PC-3 (cell line): ENCODE measurements at regions of chr20 and their contacts with region 1.

Region 1: DNA sequence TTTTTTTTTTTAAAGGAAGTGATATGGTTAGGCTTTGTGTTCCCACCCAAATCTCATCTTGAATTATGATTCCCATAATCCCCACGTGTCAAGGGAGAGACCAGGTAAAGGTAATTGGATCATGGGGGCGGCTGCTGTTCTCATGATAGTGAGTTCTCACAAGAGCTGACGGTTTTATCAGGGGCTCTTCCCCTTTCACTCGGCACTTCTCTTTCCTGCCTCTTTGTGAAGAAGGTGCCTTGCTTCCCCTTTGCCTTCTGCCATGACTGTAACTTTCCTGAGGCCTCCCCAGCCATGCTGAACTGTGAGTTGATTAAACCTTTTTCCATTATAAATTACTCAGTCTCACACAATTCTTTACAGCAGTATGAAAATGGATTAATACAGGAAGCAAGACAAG is 64.3 kb downstream of the ZFP64 start:
- DNase-seq: no peak
- ATAC-seq: no peak
- H3K4me3 ChIP-seq: no peak overlapping the region
- H3K27ac ChIP-seq: no peak overlapping the region
- H3K4me1 ChIP-seq: no peaks in the 10 kb centered on the region
- H3K27me3 ChIP-seq: no peaks in the 10 kb centered on the region
- CTCF ChIP-seq: no peak

Region 2: DNA sequence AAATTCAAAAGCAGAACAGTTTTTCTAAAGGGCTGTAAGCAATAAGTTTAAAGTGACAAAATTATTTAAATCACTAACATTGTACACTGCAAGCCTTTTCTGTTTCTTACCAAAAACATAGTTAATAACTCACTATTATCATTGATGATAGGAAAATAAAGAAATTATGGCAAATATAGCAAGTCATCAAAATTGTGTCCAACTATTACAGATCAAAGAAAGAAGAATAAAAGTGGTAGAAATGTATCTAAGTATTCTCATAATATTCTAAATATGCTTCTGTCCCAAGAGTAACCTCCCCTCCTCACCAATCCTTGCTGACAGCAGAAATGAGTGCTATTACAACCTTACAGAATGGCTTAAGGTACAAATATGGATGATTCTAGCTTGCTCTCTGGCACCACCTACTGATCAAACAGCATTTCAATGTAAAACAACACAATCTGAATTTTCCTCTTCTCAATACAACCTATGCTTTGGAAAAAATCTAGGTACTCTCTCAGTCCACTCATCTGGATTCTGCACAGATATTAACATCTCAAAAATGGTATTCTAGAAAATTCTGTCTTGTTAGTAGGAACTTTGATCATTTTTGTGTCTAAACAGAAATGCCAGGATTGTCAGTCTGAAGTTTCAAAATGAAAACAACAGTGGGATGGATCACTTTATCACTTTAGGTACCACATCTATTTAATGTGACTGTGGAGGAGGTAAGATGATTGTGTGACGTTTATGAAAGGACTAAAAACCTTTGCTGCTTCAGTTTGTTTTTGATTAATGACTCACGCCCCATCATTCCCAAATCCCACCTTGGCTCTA is 23.3 kb after region 1 on chr20:
- CTCF ChIA-PET with region 1: interaction called, 13 read pairs
- POLR2A ChIA-PET with region 1: no interaction called
- intact Hi-C with region 1: loop called (anchors 1 kb)
- DNase-seq: peak; percentile 76
- ATAC-seq: peak; percentile 84
- H3K4me3 ChIP-seq: no peak overlapping the region
- H3K27ac ChIP-seq: no peak overlapping the region
- H3K4me1 ChIP-seq: no peaks in the 10 kb centered on the region
- H3K27me3 ChIP-seq: no peaks in the 10 kb centered on the region
- CTCF ChIP-seq: peak; percentile 99

Region 3: GRCh38 chr20:52200870-52201269 is 73.6 kb after region 1 on chr20:
- CTCF ChIA-PET with region 1: no interaction called
- POLR2A ChIA-PET with region 1: no interaction called
- intact Hi-C with region 1: loop called (anchors 2 kb)
- DNase-seq: no peak
- ATAC-seq: no peak
- H3K4me3 ChIP-seq: no peak overlapping the region
- H3K27ac ChIP-seq: no peak overlapping the region
- H3K4me1 ChIP-seq: no peaks in the 10 kb centered on the region
- H3K27me3 ChIP-seq: no peaks in the 10 kb centered on the region
- CTCF ChIP-seq: no peak

Region 4: GRCh38 chr20:52219441-52219840 is 92.1 kb after region 1 on chr20:
- CTCF ChIA-PET with region 1: no interaction called
- POLR2A ChIA-PET with region 1: no interaction called
- intact Hi-C with region 1: loop called (anchors 1 kb)
- DNase-seq: peak; percentile 91
- ATAC-seq: peak; percentile 97
- H3K4me3 ChIP-seq: no peak overlapping the region
- H3K27ac ChIP-seq: no peak overlapping the region
- H3K4me1 ChIP-seq: peaks cover 4% of the 10 kb centered on the region
- H3K27me3 ChIP-seq: peaks cover 16% of the 10 kb centered on the region
- CTCF ChIP-seq: peak; percentile 63

Region 5: DNA sequence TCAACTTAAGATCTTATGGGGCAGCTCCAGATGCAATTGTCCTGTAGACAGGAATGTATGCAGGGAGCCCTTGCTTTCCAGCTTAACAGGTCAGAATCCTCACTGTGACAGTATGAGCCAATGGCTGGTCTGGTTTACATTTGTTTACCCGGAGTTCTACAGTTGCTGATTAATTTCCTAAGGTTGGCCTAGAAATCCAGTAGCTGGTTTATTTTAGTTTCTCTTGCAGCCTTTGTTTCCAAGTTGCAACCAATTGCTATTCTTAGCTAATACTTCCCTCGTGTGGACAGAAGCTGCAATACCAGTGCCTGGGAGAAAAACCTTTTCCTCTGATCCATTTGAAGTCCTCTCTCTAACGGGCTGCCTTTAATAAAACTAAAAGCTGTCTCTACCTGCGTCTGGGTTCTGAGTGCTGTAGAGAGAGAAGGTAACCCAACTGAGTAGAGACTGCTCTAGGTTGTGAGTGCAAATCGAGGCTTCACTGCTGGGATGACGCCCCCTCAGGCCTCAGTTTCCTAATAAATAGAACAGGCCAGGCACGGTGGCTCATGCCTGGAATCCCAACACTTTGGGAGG is 1420.4 kb after region 1 on chr20:
- CTCF ChIA-PET with region 1: interaction called, 4 read pairs
- POLR2A ChIA-PET with region 1: no interaction called
- intact Hi-C with region 1: loop called (anchors 10 kb)
- DNase-seq: peak; percentile 95
- ATAC-seq: peak; percentile 91
- H3K4me3 ChIP-seq: no peak overlapping the region
- H3K27ac ChIP-seq: no peak overlapping the region
- H3K4me1 ChIP-seq: no peaks in the 10 kb centered on the region
- H3K27me3 ChIP-seq: no peaks in the 10 kb centered on the region
- CTCF ChIP-seq: peak; percentile 99